Activated CD4-positive, alpha-beta memory T cell treated with anti-CD3 and anti-CD28 coated beads for 36 hours (primary cell): ENCODE measurements at regions of chr1 and their contacts with region 1.

Region 1: DNA sequence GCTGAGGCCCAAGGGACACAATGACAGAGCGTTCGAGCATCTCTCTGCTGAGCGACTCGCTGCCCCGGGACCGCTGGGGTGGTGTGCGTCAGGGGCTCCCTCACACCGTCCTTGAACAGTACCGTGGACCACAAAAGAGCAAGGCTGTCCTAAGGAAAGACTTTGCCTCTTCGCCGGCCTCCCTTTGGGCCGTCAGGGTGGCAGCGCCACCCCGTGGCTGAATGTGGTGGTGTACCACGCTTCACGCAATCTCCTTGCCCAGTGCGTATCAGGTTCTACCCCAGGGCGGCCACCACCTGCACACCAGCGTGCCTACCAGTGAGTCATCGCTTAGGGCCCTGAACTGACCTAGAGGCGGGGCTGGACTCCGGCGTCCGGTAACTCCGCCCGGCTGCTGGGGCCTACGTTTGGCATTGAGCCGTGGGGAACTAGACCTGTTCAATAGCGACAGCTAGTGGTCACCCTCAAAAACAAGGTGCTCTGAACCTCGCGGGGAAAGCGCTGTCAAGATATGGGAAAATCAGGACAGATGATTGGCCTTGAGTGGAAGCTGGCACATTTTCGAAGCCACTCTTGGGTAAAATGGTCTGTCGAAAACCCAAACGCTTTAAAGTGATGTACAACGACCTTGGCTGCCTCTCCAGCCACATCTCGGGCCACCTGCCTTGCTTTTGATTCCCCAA is 8.1 kb upstream of the TRAF3IP3 start:
- DNase-seq: peak; percentile 96
- H3K4me3 Mint-ChIP-seq: peak overlapping the region; percentile 62
- H3K27ac Mint-ChIP-seq: peak overlapping the region; percentile 87
- H3K4me1 Mint-ChIP-seq: peaks cover 79% of the 10 kb centered on the region
- H3K27me3 Mint-ChIP-seq: no peaks in the 10 kb centered on the region

Region 2: GRCh38 chr1:209576798-209577197 is 170.9 kb before region 1 on chr1:
- CTCF ChIA-PET with region 1: interaction called, 25 read pairs
- POLR2A ChIA-PET with region 1: no interaction called
- intact Hi-C with region 1: loop called (anchors 1 kb)
- DNase-seq: peak; percentile 82
- H3K4me3 Mint-ChIP-seq: no peak overlapping the region
- H3K27ac Mint-ChIP-seq: no peak overlapping the region
- H3K4me1 Mint-ChIP-seq: no peaks in the 10 kb centered on the region
- H3K27me3 Mint-ChIP-seq: peaks cover 2% of the 10 kb centered on the region

Region 3: GRCh38 chr1:209651148-209651547 is 96.6 kb before region 1 on chr1:
- CTCF ChIA-PET with region 1: interaction called, 13 read pairs
- POLR2A ChIA-PET with region 1: no interaction called
- intact Hi-C with region 1: loop called (anchors 2 kb)
- DNase-seq: peak; percentile 90
- H3K4me3 Mint-ChIP-seq: no peak overlapping the region
- H3K27ac Mint-ChIP-seq: peak overlapping the region; percentile 59
- H3K4me1 Mint-ChIP-seq: peaks cover 57% of the 10 kb centered on the region
- H3K27me3 Mint-ChIP-seq: no peaks in the 10 kb centered on the region

Region 4: DNA sequence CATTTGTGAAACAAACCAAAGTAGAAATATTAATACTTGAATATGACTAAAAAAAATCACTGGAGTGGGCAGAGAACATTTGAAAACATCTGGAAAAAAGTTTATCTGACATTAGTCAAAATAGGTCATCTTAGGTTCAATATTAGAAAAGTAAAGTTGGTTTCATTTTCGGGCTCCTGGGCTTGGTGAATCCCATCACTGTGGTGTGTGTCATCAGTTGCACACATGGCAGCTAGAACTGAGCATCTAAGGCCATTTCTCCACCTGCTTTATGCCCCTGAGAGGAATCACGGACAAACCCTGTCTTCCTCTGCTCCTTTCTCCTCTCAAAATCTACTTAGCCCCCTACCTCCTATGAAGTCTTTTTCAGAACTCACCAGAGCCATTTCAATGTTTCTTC is 37.6 kb before region 1 on chr1:
- CTCF ChIA-PET with region 1: interaction called, 9 read pairs
- POLR2A ChIA-PET with region 1: interaction called, 8 read pairs
- intact Hi-C with region 1: loop called (anchors 1 kb)
- DNase-seq: peak; percentile 62
- H3K4me3 Mint-ChIP-seq: peak overlapping the region; percentile 60
- H3K27ac Mint-ChIP-seq: peak overlapping the region; percentile 91
- H3K4me1 Mint-ChIP-seq: peaks cover 76% of the 10 kb centered on the region
- H3K27me3 Mint-ChIP-seq: no peaks in the 10 kb centered on the region

Region 5: DNA sequence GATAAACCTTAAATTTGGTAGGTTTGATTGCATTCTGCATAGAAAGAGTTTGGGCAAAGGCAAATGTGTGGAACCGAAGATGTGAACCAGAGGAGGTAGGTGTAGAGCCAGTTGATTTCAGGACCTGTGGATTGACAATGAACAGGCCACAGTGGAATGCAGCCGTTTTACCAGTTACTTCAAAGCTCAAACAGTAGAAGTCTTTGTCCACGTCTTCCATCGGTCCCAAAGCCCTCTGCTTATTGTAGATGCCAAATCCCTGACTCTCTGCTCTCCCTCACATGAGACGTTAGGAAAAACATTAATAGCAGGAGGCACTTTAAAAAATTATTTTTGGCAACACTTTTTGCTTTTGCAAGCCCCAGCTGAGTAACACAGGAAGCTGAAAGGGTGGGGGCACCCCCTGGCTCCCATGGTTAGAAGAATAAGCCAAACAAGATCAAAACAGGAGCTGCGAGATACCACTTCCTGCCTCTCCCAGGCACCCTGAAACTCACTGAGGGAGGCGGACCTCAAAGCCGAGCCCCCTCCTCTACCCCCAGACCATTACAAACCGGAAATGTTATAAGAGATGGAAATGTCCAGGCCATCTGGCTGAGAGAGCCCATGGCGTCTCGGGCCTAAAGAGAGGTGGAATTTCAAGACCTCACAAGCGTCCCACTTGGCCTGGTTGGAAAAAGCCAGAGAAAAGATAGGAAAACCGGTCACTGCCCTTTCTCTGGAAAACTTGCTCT is 21.6 kb after region 1 on chr1:
- CTCF ChIA-PET with region 1: interaction called, 98 read pairs
- POLR2A ChIA-PET with region 1: interaction called, 184 read pairs
- intact Hi-C with region 1: no loop called
- DNase-seq: peak; percentile 90
- H3K4me3 Mint-ChIP-seq: no peak overlapping the region
- H3K27ac Mint-ChIP-seq: no peak overlapping the region
- H3K4me1 Mint-ChIP-seq: peaks cover 5% of the 10 kb centered on the region
- H3K27me3 Mint-ChIP-seq: no peaks in the 10 kb centered on the region

Region 6: GRCh38 chr1:209989525-209989924 is 241.8 kb after region 1 on chr1:
- CTCF ChIA-PET with region 1: no interaction called
- POLR2A ChIA-PET with region 1: no interaction called
- intact Hi-C with region 1: no loop called
- DNase-seq: no peak
- H3K4me3 Mint-ChIP-seq: no peak overlapping the region
- H3K27ac Mint-ChIP-seq: no peak overlapping the region
- H3K4me1 Mint-ChIP-seq: no peaks in the 10 kb centered on the region
- H3K27me3 Mint-ChIP-seq: peaks cover 22% of the 10 kb centered on the region

Region 7: GRCh38 chr1:210328746-210329503 is 581.2 kb after region 1 on chr1 and contains the start of gene HHAT:
- CTCF ChIA-PET with region 1: no interaction called
- POLR2A ChIA-PET with region 1: no interaction called
- intact Hi-C with region 1: loop called (anchors 5 kb)
- DNase-seq: peak; percentile 76
- H3K4me3 Mint-ChIP-seq: peak within 1 kb of the TSS; percentile 89
- H3K27ac Mint-ChIP-seq: peak within 1 kb of the TSS; percentile 91
- H3K4me1 Mint-ChIP-seq: peaks cover 42% of the 10 kb centered on the region
- H3K27me3 Mint-ChIP-seq: peaks cover 5% of the 10 kb centered on the region
- total RNA-seq, gene HHAT: 1.6 to 1.8 TPM